ENCODE measurements at regions of chr7 and their contacts with region 1.

Region 1: GRCh38 chr7:103296901-103297836 is at the start of gene PMPCB:
- DNase-seq: peak; percentile 79 to 99
- H3K4me3 ChIP-seq: peak within 1 kb of the TSS; percentile 79 to 89
- H3K27ac ChIP-seq: peak within 1 kb of the TSS; percentile 78 to 81
- H3K4me1 ChIP-seq: peaks cover 9 to 13% of the 10 kb centered on the region in 2 donors
- H3K27me3 ChIP-seq: no peaks in the 10 kb centered on the region
- CTCF ChIP-seq: peak; percentile 89 to 96 (median 93)
- total RNA-seq, gene PMPCB: 35.5 TPM

Region 2: DNA sequence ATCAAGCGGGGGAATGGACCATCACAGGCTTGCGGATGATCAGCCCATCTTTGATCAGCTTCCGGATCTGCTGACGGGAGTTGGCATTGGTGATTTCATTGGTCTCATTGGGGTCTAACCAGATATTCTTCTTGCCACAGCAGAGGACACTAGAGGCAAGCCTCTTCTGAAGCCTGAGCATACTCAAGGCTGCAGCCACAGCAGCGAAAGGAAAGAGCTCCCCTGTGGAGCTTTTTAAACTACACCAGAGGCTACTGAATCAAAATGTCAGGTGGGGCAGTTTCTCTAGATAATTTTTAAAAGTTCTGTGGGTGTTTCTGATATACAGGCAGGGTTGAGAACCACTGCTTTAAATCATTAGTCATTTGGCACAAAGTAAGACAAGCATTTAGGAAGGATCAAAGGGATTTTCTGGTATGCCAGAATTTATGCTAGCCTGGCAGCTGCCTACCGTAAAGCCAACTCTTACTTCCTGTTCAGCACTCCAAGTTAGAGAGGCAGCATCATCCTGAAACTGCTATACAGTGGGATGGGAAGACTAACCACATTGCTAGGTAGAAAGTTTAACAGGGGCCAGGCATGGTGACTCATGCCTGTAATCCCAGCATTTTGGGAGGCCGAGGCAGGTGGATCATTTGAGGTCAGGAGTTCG is 155.3 kb before region 1 on chr7:
- intact Hi-C with region 1: no loop called
- DNase-seq: no peak
- H3K4me3 ChIP-seq: no peak overlapping the region
- H3K27ac ChIP-seq: no peak overlapping the region
- H3K4me1 ChIP-seq: peaks cover 0 to 7% of the 10 kb centered on the region in 2 donors
- H3K27me3 ChIP-seq: no peaks in the 10 kb centered on the region
- CTCF ChIP-seq: no peak

Region 3: DNA sequence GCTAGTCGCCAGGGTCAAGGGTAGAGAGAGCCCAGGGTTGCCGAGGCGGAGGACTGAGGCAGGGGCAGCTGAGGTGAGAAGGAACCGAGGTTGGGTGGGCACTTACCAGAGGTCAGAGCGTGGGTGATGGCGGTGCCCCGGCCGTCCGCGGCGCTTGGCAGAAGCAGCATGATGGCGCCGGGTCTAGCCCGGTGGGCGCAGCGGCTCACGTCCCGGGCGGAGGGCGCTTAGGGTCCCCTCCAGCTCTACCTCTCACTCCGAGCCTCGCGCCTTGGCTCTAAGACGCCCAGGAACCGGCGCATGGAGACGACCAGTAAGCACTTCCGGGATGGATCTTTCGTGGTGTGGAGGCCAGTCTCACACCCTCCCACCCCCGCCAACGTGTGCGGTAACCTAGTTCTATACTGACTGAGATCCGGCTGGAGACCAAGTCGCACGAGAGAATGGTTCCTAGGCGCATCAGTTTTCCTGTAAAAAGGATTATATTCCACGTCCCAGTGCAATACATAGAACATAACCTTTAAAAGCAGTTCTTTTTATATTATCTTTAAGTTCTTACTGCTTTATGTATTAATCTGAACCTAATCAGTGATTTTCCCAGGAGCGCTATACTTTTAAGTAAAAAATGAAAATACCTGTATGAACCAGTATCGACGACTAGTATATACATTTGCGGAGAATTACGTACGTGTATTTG is 47.4 kb after region 1 on chr7 and contains the start of gene DNAJC2:
- intact Hi-C with region 1: loop called (anchors 2 kb)
- DNase-seq: peak; percentile 30 to 93
- H3K4me3 ChIP-seq: peak within 1 kb of the TSS; percentile 77 to 99
- H3K27ac ChIP-seq: peak within 1 kb of the TSS; percentile 88 to 90
- H3K4me1 ChIP-seq: peaks cover 5 to 20% of the 10 kb centered on the region in 2 donors
- H3K27me3 ChIP-seq: no peaks in the 10 kb centered on the region
- CTCF ChIP-seq: no peak
- total RNA-seq, gene DNAJC2: 7.6 TPM

Region 4: GRCh38 chr7:103710247-103710646 is 413.1 kb after region 1 on chr7:
- intact Hi-C with region 1: no loop called
- DNase-seq: no peak
- H3K4me3 ChIP-seq: no peak overlapping the region
- H3K27ac ChIP-seq: no peak overlapping the region
- H3K4me1 ChIP-seq: no peaks in the 10 kb centered on the region
- H3K27me3 ChIP-seq: no peaks in the 10 kb centered on the region
- CTCF ChIP-seq: no peak

Measured in ascending aorta (tissue), 2 donors.